Aorta (tissue), 5 donors: ENCODE measurements at regions of chr1 and their contacts with region 1.

Region 1: GRCh38 chr1:93805027-93805426 is 74.0 kb downstream of the DNTTIP2 start:
- DNase-seq: no peak
- ATAC-seq: no peak
- H3K4me3 ChIP-seq: no peak overlapping the region
- H3K27ac ChIP-seq: no peak overlapping the region
- H3K4me1 ChIP-seq: peaks cover 0 to 3% of the 10 kb centered on the region in 2 donors
- H3K27me3 ChIP-seq: no peaks in the 10 kb centered on the region

Region 2: DNA sequence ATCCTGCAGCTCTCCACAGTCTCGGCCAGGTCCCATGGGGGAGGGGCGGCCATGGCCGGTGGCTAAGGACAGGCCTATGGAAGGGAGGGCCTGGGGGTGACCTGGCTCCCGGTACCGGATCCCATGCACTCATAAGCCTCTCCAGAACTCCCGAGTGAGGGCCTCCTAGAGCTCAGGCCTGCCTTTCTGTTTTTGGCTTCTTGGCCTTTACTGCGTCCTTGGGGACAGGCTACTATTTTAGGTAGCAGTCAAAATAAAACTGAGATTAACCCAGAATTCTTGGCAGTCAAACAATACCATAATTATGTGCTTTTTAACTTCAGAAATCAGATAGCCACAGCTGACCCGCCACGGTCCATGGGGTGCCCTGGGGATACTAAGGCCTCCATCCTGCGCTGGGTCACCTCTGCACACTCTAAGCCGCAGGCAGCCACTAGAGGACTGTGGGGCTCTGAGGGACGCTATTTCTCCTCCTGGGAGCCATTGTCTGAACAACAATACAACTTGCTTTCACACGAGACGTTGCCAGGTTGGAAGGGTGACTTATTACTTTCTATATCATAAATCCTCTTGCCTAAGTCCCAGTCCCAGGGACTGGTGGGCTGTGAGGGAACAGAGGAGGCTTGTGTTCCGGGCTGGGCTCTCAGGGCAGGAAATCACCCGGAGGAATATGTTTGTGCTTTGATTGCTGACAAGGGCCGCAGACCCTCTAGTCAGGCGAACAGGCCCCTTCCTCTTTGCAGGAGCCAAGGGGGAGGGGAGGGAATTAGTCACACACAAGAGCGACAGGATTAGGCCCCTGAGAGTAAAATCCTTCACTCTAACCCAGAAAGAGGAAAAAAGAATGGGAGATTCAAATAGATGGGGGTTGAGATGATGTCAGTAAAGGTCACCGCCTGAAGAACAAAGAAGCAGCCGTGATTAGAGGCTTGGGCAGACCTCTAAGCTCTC is 82.7 kb before region 1 on chr1:
- intact Hi-C with region 1: loop called in 1 of 2 experiments (anchors 5 kb)
- DNase-seq: peak in 1 of 2 donors; percentile 70
- ATAC-seq: peak; percentile 85
- H3K4me3 ChIP-seq: no peak overlapping the region
- H3K27ac ChIP-seq: peak overlapping the region; percentile 4 to 75
- H3K4me1 ChIP-seq: peaks cover 4 to 8% of the 10 kb centered on the region in 2 donors
- H3K27me3 ChIP-seq: no peaks in the 10 kb centered on the region